Activated CD4-positive, alpha-beta T cell treated with anti-CD3 and anti-CD28 coated beads for 36 hours (primary cell): ENCODE measurements at regions of chr19 and their contacts with region 1.

Region 1: GRCh38 chr19:29610563-29611271 is 4.6 kb downstream of the POP4 start:
- DNase-seq: peak; percentile 93
- ATAC-seq: peak; percentile 76
- H3K4me3 Mint-ChIP-seq: no peak overlapping the region
- H3K27ac Mint-ChIP-seq: no peak overlapping the region
- H3K4me1 Mint-ChIP-seq: peaks cover 12% of the 10 kb centered on the region
- H3K27me3 Mint-ChIP-seq: no peaks in the 10 kb centered on the region

Region 2: DNA sequence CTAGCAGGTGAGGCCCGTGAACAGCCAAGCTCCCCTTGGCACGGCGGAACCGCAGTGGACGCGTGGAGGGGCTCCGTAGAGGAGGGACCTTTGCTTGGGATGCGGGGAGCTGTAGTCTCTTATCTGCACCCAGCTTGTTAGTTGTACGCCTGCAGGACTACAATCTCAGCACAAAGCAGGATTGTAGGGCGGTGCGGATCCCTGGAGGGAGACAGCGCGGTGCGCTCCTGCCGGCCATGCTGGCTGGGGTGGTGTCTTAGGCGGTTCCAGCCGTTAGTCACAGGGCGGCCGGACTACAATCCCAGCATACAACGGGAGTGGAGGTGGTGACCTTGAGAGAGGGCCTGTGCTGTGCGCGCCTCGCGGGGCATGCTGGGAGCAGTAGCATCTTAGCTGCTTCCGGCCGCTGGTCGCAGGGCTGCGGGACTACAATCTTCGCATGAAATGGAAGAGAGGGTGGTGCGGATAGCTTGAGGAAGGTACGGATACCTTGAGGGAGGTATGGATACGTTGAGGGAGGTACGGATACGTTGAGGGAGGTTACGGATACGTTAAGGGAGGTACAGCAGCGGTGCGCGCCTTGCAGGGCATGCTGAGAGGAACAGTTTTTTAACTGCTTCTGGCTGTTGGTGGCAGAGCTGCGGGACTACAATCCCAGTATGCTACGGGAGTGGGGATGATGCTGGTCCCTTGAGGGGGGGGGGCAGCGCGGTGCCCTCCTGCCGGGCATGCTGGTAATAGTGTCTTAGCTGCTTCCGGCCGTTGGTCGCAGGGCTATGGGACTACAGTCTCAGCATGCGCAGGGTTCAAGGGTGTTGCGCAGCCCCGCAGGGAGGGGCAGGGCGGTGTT is 1816.8 kb before region 1 on chr19:
- CTCF ChIA-PET with region 1: no interaction called
- POLR2A ChIA-PET with region 1: no interaction called
- intact Hi-C with region 1: loop called in 1 of 2 experiments (anchors 10 kb)
- DNase-seq: peak; percentile 96
- ATAC-seq: peak; percentile 95
- H3K4me3 Mint-ChIP-seq: peak overlapping the region; percentile 96
- H3K27ac Mint-ChIP-seq: peak overlapping the region; percentile 99
- H3K4me1 Mint-ChIP-seq: peaks cover 14% of the 10 kb centered on the region
- H3K27me3 Mint-ChIP-seq: no peaks in the 10 kb centered on the region

Region 3: DNA sequence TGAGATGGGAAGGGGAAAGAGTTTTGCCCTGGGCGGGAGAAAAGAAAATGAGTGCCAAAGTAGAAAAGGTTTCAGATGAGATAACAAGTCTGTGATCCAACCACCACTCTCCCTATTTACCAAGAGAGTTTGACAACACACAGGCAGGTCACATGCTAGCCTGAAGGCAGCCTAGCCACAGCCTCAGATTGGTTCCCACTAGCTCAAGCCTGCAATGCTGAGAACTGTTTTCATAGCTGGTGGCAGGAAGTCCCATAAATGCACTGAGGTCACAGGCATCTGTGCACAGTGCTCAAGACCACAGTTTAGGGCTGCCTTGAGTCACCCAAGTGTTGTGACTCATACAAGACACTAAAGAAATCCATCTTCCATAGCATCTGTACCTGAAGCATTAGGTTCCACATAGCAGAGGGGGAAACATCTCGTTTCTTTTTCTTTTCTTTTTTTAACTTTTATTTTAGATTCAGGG is 23.2 kb before region 1 on chr19:
- CTCF ChIA-PET with region 1: interaction called, 16 read pairs
- POLR2A ChIA-PET with region 1: no interaction called
- intact Hi-C with region 1: loop called (anchors 1 kb)
- DNase-seq: peak; percentile 87
- ATAC-seq: peak; percentile 99
- H3K4me3 Mint-ChIP-seq: no peak overlapping the region
- H3K27ac Mint-ChIP-seq: peak overlapping the region; percentile 89
- H3K4me1 Mint-ChIP-seq: peaks cover 30% of the 10 kb centered on the region
- H3K27me3 Mint-ChIP-seq: peaks cover 27% of the 10 kb centered on the region

Region 4: GRCh38 chr19:29665215-29665825 is 54.6 kb after region 1 on chr19 and contains the start of gene PLEKHF1:
- CTCF ChIA-PET with region 1: interaction called, 51 read pairs
- POLR2A ChIA-PET with region 1: interaction called, 8 read pairs
- intact Hi-C with region 1: loop called (anchors 1 to 2 kb)
- DNase-seq: peak; percentile 92
- ATAC-seq: peak; percentile 76
- H3K4me3 Mint-ChIP-seq: peak within 1 kb of the TSS; percentile 87
- H3K27ac Mint-ChIP-seq: peak within 1 kb of the TSS; percentile 96
- H3K4me1 Mint-ChIP-seq: peaks cover 71% of the 10 kb centered on the region
- H3K27me3 Mint-ChIP-seq: no peaks in the 10 kb centered on the region
- total RNA-seq, gene PLEKHF1: 25.4 to 26.6 TPM

Region 5: GRCh38 chr19:29694669-29695627 is 84.2 kb after region 1 on chr19:
- CTCF ChIA-PET with region 1: interaction called, 86 read pairs
- POLR2A ChIA-PET with region 1: no interaction called
- intact Hi-C with region 1: loop called (anchors 1 kb)
- DNase-seq: peak; percentile 92
- ATAC-seq: peak; percentile 97
- H3K4me3 Mint-ChIP-seq: no peak overlapping the region
- H3K27ac Mint-ChIP-seq: peak overlapping the region; percentile 53
- H3K4me1 Mint-ChIP-seq: peaks cover 12% of the 10 kb centered on the region
- H3K27me3 Mint-ChIP-seq: no peaks in the 10 kb centered on the region

Region 6: GRCh38 chr19:29811125-29812079 is 200.7 kb after region 1 on chr19 and contains the start of gene CCNE1:
- CTCF ChIA-PET with region 1: no interaction called
- POLR2A ChIA-PET with region 1: no interaction called
- intact Hi-C with region 1: loop called in 1 of 2 experiments (anchors 1 kb)
- DNase-seq: peak; percentile 98
- ATAC-seq: peak; percentile 93
- H3K4me3 Mint-ChIP-seq: peak within 1 kb of the TSS; percentile 88
- H3K27ac Mint-ChIP-seq: peak within 1 kb of the TSS; percentile 94
- H3K4me1 Mint-ChIP-seq: peaks cover 15% of the 10 kb centered on the region
- H3K27me3 Mint-ChIP-seq: no peaks in the 10 kb centered on the region
- total RNA-seq, gene CCNE1: 29.4 to 30.4 TPM